Sciatic nerve (tissue), 2 donors: ENCODE measurements at regions of chr12 and their contacts with region 1.

Region 1: DNA sequence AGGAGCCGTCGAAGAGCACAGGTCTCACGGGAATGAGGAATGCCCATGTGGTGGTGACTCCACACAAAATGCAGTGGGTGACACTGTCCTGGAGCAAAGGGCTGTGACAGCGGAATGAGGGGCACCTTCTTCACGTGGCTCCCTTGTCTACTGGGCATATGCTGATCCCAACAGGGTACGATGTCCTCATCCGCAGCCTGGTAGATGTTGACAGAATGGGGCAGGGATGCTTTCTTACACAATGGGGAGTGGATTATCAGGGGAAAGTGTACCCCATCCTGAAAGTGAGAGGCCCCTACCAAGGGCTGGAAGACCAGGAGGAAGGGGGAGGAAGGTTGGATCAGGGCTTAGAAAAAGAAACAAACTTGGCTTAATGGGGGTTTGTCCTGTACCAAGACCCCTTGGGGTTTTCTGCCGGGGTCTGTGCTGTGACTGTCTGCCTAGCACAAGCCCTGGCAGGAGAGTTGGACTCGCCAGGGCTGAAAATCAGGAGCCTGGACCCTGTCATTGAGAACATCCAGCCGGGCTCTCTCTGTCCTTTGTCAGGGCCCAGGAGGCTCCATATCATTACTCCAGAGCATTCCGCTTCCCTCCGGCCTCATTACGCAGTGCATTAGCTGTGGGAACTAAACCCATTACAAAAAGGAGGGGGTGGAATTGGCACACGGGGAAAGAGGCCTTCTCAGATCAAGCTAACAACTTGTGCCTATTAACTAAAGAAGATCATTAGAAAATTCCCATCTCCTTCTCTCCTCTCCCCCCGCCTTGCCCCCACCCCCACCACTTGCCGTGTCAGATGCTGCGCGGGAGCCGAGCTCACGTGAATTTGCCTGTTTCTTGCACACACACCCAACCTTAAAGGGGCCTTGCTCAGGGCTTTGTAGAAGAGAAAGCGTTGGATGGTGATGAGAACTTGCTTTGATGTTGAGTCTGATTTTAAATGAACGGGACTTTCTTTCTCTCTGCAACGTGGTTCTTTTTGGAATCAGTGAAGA is 171.8 kb upstream of the PARP11 start:
- DNase-seq: no peak
- ATAC-seq: no peak

Region 2: DNA sequence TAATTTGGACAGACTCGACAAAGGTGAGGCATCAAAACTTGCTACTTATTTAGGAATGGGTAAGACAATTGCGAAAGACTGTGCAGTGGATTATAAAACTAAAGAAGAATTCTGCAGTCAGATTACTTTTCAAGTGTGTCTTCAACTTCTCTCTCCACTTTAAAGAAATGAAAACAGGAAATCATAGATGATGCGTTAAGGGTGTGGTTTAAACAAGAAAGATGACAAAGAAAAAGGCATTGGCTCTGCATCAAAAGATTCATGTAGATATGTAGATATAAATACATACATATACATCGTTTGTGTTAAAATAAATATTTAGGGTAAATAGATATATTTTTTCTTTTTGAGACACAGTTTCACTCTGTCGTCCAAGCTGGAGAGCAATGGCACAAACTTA is 97.3 kb before region 1 on chr12:
- intact Hi-C with region 1: no loop called
- DNase-seq: no peak
- ATAC-seq: no peak

Region 3: DNA sequence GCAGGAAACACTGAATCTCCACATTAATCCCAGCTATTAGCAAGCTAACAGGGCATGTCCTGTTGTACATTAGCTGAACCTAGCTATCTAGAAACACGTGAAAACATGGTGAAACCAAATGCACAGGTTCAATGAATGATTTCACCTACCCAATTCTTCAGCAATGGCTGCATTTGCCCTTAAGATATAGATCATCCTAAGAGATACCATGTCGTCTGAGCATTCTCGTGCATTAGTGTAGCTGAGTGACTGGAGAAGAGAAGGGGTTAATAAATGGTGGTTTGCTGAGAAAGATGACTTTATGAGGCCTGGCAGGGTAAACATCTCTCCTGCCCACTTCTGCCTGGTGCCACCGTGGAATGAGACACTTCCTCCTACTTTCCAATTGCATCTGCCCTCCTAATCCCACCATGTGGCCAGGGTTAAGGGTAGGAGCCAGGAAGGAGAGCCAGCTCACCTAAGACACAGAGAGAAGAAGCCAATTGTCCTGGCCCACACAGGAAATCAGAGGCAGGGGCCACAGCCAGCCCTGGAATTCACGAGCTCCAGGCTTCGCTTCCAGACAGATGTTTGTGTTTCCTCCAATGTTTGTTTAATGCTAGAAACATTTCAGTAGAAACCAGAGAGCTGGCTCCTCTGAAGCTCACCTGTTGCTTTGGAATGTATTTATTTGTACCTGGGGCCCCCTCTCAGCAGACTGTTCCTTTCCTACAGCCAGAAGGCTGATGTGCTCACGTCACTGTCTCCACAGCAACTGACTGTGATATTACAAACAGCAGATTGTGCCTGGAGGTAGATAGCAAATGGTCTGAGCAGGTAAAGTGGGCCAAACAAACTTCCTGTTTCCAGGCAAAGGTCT is 45.8 kb before region 1 on chr12:
- intact Hi-C with region 1: loop called (anchors 5 kb)
- DNase-seq: no peak
- ATAC-seq: no peak